ENCODE measurements at regions of chr19 and their contacts with region 1.

Region 1: DNA sequence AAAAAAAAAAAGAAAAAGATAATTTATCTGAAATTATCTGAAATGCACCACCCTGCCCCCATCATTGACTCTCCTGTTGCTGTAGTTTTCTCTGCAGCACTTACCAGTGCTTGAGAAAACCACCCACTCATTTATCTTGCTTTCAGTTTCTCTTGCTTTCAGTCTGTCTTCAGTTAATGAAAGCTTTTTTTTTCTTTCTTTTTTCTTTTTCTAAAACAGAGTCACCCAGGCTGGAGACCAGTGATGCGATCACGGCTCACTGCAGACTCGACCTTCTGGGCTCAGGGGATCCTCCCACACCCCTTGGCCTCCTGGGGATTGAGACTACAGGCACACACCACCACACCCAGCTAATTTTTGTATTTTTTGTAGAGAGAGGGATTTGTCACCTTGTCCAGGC is 4.3 kb upstream of the ACP5 start:
- DNase-seq: peak; percentile 82
- ATAC-seq: peak; percentile 89
- H3K4me3 Mint-ChIP-seq: peak overlapping the region; percentile 65
- H3K27ac Mint-ChIP-seq: peak overlapping the region; percentile 94
- H3K4me1 Mint-ChIP-seq: peaks cover 36% of the 10 kb centered on the region
- H3K27me3 Mint-ChIP-seq: no peaks in the 10 kb centered on the region
- CTCF ChIP-seq: no peak

Region 2: GRCh38 chr19:10043286-10043927 is 1538.3 kb before region 1 on chr19:
- CTCF ChIA-PET with region 1: no interaction called
- POLR2A ChIA-PET with region 1: no interaction called
- intact Hi-C with region 1: no loop called
- DNase-seq: no peak
- ATAC-seq: no peak
- H3K4me3 Mint-ChIP-seq: no peak overlapping the region
- H3K27ac Mint-ChIP-seq: no peak overlapping the region
- H3K4me1 Mint-ChIP-seq: no peaks in the 10 kb centered on the region
- H3K27me3 Mint-ChIP-seq: peaks cover 21% of the 10 kb centered on the region
- CTCF ChIP-seq: no peak

Region 3: DNA sequence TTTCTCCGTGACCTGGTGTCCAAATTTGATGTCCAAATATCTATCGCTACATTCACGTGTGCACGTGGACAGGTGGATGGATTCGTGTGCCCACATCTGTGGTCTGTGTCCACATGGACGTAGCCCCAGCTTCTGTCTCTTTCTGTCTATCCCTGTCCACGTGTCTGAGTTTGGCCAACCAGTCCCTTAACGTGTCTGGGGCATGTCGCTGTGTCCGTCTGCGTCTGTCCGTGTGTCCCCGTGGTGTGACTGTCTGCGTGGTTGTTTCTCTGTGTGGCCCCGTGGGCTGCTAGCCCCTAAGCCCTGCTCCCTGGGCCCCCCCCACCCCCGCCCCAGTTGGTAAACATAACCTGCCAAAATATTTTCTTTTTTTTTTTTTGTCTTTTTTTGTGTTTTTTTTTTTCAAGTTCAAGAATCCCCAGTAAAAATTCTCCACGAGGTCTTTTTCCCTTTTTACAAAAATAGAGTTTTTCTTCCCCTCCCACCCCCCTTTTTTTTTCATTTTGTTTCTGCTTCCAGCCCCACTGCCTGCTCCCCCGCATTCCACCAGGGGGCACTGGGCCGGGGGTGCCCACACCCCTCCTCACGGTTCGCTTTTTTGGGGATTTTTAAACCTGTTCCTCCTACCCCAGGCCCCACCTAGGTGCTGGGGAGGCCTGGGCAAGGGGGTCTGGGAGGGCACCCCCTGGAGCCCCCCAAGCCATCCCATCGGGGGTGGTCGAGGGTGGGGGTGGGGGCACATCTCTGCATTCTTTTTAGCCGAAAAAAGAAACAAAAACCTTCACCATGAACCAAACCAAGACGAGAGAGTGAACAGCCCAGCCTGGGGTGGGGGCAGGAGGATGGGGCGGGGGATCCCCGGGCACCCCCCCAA is 128.0 kb before region 1 on chr19:
- CTCF ChIA-PET with region 1: no interaction called
- POLR2A ChIA-PET with region 1: no interaction called
- intact Hi-C with region 1: no loop called
- DNase-seq: peak; percentile 35
- ATAC-seq: no peak
- H3K4me3 Mint-ChIP-seq: no peak overlapping the region
- H3K27ac Mint-ChIP-seq: no peak overlapping the region
- H3K4me1 Mint-ChIP-seq: no peaks in the 10 kb centered on the region
- H3K27me3 Mint-ChIP-seq: no peaks in the 10 kb centered on the region
- CTCF ChIP-seq: no peak

Region 4: DNA sequence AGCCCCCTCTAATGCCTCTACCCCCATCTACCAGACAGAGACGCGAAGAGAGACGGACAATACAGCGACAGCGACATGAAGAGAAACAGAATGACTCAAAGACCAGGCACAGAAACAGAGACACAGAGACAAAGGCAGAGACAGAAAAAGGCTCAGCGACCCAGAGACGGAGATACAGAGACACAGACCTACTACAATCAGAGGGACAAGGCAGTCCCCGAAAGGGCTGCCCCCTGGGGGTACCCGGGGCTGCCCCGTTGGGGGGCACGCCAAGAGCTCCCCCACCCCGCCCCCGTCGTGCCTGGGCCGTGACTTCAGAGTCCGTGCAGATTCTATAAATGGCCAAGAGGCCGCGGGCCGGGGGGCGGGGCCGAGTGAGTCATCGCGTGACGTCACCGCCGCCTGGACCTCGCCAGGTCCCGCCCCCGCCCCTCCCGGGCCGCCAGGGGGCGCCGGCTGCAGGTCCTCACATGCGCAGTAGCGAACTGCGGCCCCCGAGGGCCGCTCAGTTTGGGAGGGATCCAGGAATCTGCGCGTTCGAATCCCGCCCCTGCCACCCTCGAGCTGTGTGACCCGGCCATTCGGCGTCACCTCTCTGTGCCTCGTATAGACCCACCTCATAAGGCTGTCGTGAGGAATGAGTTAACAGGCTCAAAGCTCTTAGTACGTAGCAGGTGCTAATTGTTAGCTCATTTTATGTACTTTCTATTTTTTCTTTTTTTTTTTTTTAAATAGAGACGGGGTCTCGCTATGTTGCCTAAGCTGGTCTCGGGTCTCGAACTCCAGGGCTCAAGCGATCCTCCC is 45.7 kb before region 1 on chr19:
- CTCF ChIA-PET with region 1: interaction called, 12 read pairs
- POLR2A ChIA-PET with region 1: interaction called, 3 read pairs
- intact Hi-C with region 1: no loop called
- DNase-seq: peak; percentile 93
- ATAC-seq: peak; percentile 81
- H3K4me3 Mint-ChIP-seq: peak overlapping the region; percentile 46
- H3K27ac Mint-ChIP-seq: peak overlapping the region; percentile 76
- H3K4me1 Mint-ChIP-seq: peaks cover 26% of the 10 kb centered on the region
- H3K27me3 Mint-ChIP-seq: peaks cover 19% of the 10 kb centered on the region
- CTCF ChIP-seq: peak; percentile 91

Region 5: GRCh38 chr19:11612816-11613511 is 31.2 kb after region 1 on chr19:
- CTCF ChIA-PET with region 1: no interaction called
- POLR2A ChIA-PET with region 1: no interaction called
- intact Hi-C with region 1: no loop called
- DNase-seq: peak; percentile 21
- ATAC-seq: peak; percentile 81
- H3K4me3 Mint-ChIP-seq: no peak overlapping the region
- H3K27ac Mint-ChIP-seq: peak overlapping the region; percentile 75
- H3K4me1 Mint-ChIP-seq: peaks cover 10% of the 10 kb centered on the region
- H3K27me3 Mint-ChIP-seq: no peaks in the 10 kb centered on the region
- CTCF ChIP-seq: no peak

Region 6: GRCh38 chr19:11639602-11640471 is 58.1 kb after region 1 on chr19:
- CTCF ChIA-PET with region 1: no interaction called
- POLR2A ChIA-PET with region 1: no interaction called
- intact Hi-C with region 1: no loop called
- DNase-seq: peak; percentile 99
- ATAC-seq: peak; percentile 100
- H3K4me3 Mint-ChIP-seq: peak overlapping the region; percentile 79
- H3K27ac Mint-ChIP-seq: no peak overlapping the region
- H3K4me1 Mint-ChIP-seq: no peaks in the 10 kb centered on the region
- H3K27me3 Mint-ChIP-seq: peaks cover 8% of the 10 kb centered on the region
- CTCF ChIP-seq: no peak

Measured in activated CD8-positive, alpha-beta T cell treated with anti-CD3 and anti-CD28 coated beads for 36 hours (primary cell).